ENCODE measurements at regions of chrX and their contacts with region 1.

Region 1: GRCh38 chrX:16123222-16123786 is at the start of gene GRPR:
- DNase-seq: peak; percentile 65
- H3K4me3 ChIP-seq: no peak within 1 kb of the TSS
- H3K27ac ChIP-seq: no peak within 1 kb of the TSS
- H3K4me1 ChIP-seq: no peaks in the 10 kb centered on the region
- H3K27me3 ChIP-seq: no peaks in the 10 kb centered on the region
- CTCF ChIP-seq: peak in 3 of 4 experiments; percentile 49 to 63 (median 50)
- POLR2A ChIP-seq: no peak
- total RNA-seq, gene GRPR: 1.0 TPM in 1 of 2 donors, not detected in the other

Region 2: GRCh38 chrX:16444353-16444752 is 321.0 kb after region 1 on chrX:
- intact Hi-C with region 1: loop called (anchors 5 kb)
- DNase-seq: no peak
- H3K4me3 ChIP-seq: no peak overlapping the region
- H3K27ac ChIP-seq: no peak overlapping the region
- H3K4me1 ChIP-seq: no peaks in the 10 kb centered on the region
- H3K27me3 ChIP-seq: no peaks in the 10 kb centered on the region
- CTCF ChIP-seq: no peak
- POLR2A ChIP-seq: no peak

Measured in prostate gland (tissue), 2 donors.